ENCODE measurements at regions of chr7 and their contacts with region 1.

Region 1: DNA sequence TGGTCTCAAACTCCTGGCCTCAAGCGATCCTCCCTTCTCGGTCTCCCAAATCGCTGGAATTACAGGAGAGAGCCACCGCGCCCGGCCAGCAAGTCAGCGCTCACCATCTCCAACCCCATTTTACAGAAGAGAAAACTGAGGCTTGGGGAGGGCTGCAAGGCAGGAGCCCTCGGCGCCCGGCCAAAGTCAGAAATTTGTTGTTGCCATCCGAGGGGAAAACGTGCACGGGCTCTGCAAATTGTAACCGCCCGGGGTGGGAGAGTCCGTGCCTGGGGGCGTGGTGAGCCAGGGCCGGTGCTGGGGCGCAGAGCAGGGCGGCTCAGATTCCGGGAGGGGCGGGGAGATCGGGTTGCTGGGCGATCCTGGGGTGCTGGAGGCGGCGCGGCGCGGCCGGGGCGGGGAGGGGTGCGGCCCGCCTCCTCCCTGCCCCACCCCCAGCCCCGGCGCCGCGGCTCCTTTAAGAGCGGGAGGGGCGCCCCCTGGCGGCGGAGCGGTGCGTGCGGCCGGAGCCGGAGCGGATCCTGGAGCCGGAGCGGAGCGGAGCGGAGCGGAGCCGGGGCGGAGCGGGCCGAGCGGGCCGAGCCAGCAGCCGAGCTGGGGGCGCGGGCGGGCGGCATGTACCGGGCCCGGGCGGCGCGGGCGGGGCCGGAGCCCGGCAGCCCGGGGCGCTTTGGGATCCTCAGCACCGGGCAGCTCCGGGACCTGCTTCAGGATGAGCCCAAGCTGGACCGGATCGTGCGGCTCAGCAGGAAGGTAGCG is at the start of gene VPS37D:
- DNase-seq: peak; percentile 91
- H3K4me3 Mint-ChIP-seq: peak within 1 kb of the TSS; percentile 76
- H3K27ac Mint-ChIP-seq: no peak within 1 kb of the TSS
- H3K4me1 Mint-ChIP-seq: peaks cover 6% of the 10 kb centered on the region
- H3K27me3 Mint-ChIP-seq: peaks cover 33% of the 10 kb centered on the region
- total RNA-seq, gene VPS37D: 0.30 and 0.34 TPM in 2 replicates

Region 2: DNA sequence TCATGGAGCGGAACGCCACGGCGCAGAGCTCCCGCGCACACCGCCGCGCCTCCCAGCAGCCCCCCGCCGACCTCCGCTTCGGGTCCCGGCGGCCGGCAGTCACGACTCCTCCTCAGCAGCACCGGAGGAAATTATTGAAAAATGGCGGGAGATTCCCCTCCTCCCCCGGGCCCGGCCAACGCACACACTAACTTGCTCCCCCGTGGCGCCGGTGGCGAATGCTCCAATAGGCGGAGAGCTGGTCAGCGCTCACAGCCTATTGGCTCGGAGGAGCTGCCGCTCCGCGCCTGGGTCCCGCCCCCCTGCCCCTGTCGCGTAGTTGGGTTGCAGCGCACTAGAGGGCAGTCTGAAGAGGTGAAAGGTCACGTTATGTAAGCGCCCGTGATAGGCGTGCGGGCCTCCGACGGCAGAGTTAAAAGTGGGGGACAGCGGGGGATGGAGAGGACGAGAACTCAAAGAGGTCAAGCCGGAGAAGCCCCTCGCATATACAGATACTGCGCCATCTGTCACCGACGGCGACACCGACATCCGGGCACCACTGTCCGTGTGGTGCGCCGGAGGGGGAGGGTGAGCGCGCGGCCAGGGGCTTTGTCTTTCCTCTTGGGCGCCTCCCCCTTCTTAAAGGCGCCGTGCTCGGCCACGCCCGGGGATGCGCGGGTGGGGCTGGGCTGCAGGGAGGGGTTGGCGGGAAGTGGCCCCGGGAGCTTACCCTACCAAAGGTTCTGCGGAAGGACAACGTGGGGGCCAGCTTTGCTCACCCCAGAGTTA is 145.2 kb before region 1 on chr7 and contains the start of gene BAZ1B:
- intact Hi-C with region 1: loop called (anchors 1 kb)
- DNase-seq: peak; percentile 95
- H3K4me3 Mint-ChIP-seq: peak within 1 kb of the TSS; percentile 98
- H3K27ac Mint-ChIP-seq: peak within 1 kb of the TSS; percentile 94
- H3K4me1 Mint-ChIP-seq: peaks cover 52% of the 10 kb centered on the region
- H3K27me3 Mint-ChIP-seq: no peaks in the 10 kb centered on the region
- total RNA-seq, gene BAZ1B: 99.6 and 101 TPM in 2 replicates

Region 3: DNA sequence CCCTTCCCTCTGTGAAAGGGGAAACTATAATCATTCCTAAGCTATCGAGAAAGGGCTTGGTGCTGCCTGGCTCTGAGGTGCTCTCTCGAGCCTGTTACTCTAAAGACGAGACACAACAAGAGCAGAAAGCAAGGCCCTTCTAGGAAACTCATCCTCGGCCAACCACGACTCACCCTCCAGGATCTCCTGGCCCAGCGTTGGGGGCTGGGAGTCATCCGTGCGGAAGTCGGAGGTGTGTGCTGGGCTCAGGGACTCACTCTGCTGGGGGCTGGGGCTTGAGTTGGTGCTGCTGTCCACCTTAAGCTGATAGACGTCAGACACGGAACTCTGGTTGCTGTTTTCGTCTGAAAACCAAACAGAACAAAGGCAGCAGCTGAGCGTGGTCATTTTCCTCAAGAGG is 127.8 kb before region 1 on chr7:
- intact Hi-C with region 1: no loop called
- DNase-seq: no peak
- H3K4me3 Mint-ChIP-seq: no peak overlapping the region
- H3K27ac Mint-ChIP-seq: no peak overlapping the region
- H3K4me1 Mint-ChIP-seq: no peaks in the 10 kb centered on the region
- H3K27me3 Mint-ChIP-seq: no peaks in the 10 kb centered on the region

Region 4: DNA sequence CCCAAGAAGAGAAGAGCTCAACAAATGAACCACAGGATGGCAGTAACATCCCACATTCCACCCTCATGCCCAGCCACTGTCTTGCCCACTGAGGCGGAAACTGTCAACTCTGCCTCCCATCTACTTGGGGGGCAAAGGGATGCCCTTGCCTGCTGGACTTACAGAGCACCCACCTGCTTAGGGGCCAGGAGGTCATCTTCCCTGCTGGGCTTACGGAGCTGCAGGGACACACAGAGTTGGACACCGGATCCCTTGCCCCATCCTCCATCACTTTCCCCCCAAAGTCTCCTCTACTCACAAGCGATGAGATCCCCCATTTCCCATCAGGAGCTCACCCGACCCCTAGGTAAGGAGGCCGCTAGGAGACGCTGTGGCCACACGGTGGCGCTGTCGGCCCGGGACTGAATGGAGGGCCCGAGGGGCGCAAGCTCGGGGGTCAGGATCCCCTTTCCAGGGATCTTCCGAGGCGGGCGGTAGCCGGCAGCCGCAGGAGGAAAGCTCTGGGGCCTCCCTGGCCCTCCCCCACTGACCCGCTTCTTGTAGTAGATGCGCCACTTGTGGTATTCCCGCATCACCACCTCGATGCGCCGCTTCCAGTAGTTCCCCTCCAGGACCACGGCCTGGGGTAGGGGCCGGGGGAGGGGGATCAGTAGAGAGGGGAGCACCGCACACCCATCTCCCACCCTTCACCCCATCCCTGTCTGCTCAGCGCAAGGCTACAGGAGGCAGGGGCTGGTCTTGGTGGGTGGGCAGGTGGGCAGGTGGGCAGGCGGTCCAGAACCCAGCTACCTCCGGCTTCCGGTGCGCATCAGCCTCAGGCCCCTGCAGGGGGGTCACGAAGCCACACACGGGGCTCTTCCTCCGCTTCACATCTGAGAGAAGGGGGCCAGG is 60.5 kb before region 1 on chr7:
- intact Hi-C with region 1: loop called (anchors 5 kb)
- DNase-seq: peak; percentile 44
- H3K4me3 Mint-ChIP-seq: no peak overlapping the region
- H3K27ac Mint-ChIP-seq: no peak overlapping the region
- H3K4me1 Mint-ChIP-seq: no peaks in the 10 kb centered on the region
- H3K27me3 Mint-ChIP-seq: peaks cover 14% of the 10 kb centered on the region

Region 5: DNA sequence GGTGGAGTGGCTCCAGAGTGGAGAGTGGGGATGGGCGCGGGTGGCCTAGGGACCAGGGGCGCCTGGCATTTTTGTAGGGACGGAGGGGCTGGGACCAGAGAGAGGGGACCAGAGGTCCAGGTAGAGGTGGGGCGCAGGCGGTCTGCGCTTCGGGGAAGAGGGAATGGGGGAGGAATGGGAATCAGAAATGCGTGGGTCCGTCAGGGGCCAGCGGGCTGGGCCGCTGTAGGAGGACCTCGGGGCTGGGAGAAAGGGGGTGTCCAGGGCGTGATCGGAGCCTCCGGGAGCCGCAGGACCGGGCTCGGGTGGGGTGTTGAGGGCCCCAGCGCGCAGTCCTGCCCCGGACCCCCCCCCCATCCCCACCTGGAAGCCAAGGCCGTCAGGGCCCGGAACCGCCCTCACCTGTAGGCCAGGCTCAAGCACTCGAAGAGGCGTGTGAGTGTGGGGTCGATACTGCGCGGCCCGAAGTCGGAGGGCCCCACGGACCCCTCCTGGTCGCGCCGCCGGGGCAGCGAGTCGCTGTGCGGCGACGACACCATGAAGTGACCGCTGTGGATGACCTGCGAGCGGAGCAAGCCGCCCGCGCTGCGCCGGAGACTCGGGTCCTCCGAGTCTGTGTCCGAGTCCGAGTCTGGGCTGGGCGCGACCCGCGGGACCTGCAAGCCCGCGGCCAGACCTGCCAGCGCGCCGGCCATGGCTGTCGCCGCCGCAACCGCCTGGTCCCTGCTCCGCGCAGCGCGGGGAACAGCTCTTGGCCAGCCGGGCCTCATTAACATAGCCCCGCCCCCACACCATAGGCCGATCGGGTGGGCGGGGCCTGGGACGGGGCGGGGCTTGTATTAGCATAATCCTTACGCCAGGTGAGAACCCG is 43.5 kb before region 1 on chr7 and contains the start of gene MLXIPL:
- intact Hi-C with region 1: loop called (anchors 5 kb)
- DNase-seq: peak; percentile 34
- H3K4me3 Mint-ChIP-seq: no peak within 1 kb of the TSS
- H3K27ac Mint-ChIP-seq: no peak within 1 kb of the TSS
- H3K4me1 Mint-ChIP-seq: no peaks in the 10 kb centered on the region
- H3K27me3 Mint-ChIP-seq: peaks cover 54% of the 10 kb centered on the region
- total RNA-seq, gene MLXIPL: not detected in 2 replicates

Region 6: DNA sequence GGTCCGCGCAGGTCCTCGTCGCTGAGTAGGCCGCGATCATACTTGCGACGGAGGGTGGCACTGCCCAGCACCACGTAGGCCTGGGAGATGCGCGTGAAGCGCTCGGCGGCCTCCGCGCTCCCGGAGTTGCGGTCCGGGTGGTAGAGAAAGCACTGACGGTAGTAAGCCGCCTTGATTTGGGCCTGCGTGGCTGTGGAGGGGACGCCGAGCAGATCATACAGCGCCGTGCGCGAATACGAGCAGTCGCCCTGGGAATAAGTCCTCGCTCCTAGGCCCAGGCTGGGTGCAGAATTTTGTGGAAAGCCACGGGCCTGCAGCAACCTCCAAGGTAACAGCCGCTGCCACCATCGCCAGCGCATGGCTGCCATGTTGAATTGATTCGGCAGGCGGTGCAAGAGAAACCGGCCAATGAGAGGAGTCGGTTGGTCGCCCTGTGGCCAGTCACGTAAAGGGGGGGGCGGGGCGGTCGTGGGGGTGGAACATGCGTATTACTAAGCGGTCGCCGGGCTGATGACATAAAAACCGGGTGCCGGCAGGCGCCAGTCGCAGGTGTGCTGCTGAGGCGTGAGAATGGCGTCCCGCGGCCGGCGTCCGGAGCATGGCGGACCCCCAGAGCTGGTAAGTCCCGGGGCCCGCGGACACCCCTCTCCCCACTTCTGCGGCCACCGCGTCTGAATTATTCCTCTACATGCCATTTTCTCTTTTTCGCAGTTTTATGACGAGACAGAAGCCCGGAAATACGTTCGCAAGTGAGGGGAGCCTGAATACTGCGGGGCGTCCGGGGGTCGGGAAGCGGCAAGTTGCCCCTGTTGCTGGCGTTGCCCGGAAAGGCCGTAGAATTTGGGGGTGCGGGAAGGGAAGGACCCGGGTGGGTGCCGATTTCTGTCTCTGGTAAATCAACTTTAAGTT is 15.8 kb after region 1 on chr7 and contains the starts of genes BUD23 and DNAJC30:
- intact Hi-C with region 1: loop called (anchors 1 kb)
- DNase-seq: peak; percentile 88
- H3K4me3 Mint-ChIP-seq: peak within 1 kb of the TSS; percentile 97
- H3K27ac Mint-ChIP-seq: peak within 1 kb of the TSS; percentile 97
- H3K4me1 Mint-ChIP-seq: peaks cover 21% of the 10 kb centered on the region
- H3K27me3 Mint-ChIP-seq: no peaks in the 10 kb centered on the region
- total RNA-seq, gene BUD23: 96.0 and 109 TPM in 2 replicates
- total RNA-seq, gene DNAJC30: 9.2 TPM in 2 replicates

Region 7: GRCh38 chr7:73701357-73701995 is 34.0 kb after region 1 on chr7:
- intact Hi-C with region 1: no loop called
- DNase-seq: no peak
- H3K4me3 Mint-ChIP-seq: no peak overlapping the region
- H3K27ac Mint-ChIP-seq: no peak overlapping the region
- H3K4me1 Mint-ChIP-seq: no peaks in the 10 kb centered on the region
- H3K27me3 Mint-ChIP-seq: no peaks in the 10 kb centered on the region

Region 8: DNA sequence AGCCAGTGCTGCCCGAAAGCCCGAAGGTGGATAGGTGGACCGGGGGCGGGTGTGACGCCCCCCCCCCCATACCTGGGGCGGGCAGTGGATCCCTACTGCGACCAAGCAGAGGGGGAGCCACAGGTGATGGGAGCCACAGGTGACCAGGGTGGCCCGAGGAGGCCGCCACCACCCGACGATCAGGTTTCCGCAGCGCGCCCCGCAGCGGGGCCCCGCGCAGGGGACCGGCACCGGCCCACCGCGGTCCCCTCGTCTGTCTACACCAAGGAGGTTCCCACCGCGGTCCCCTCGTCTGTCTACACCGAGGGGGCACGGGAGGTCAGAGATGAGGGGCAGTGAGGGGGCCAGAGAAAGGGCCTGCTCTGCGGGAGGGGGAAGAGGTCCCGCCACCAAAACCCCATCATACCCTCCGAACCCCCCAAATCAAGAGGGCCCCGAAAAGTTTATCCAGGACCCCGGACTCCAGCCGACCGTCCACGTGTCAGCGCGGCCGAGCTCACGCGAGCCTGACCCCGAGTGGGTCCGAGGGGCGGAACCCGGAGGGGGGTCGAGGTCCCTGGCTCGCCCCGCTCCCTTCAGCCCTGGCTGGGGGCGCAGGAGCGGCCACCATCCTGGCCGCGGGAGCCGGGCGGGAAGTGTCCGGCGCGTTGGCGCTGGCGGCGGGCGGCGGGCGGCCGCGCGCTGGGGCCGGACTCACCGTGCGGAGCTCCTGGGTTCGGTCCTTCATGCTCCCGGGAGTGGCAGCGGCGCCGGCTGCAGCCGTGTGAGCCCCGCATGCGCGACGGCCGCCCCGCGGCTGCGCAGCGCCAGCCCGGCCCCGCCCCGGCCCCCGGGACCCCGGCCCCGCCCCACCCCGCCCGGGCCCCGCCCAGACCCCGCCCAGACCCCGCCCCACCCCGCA is 51.6 kb after region 1 on chr7 and contains the start of gene STX1A:
- intact Hi-C with region 1: loop called (anchors 5 kb)
- DNase-seq: peak; percentile 71
- H3K4me3 Mint-ChIP-seq: peak within 1 kb of the TSS; percentile 89
- H3K27ac Mint-ChIP-seq: peak within 1 kb of the TSS; percentile 62
- H3K4me1 Mint-ChIP-seq: peaks cover 31% of the 10 kb centered on the region
- H3K27me3 Mint-ChIP-seq: peaks cover 9% of the 10 kb centered on the region
- total RNA-seq, gene STX1A: 17.2 and 17.6 TPM in 2 replicates

Region 9: DNA sequence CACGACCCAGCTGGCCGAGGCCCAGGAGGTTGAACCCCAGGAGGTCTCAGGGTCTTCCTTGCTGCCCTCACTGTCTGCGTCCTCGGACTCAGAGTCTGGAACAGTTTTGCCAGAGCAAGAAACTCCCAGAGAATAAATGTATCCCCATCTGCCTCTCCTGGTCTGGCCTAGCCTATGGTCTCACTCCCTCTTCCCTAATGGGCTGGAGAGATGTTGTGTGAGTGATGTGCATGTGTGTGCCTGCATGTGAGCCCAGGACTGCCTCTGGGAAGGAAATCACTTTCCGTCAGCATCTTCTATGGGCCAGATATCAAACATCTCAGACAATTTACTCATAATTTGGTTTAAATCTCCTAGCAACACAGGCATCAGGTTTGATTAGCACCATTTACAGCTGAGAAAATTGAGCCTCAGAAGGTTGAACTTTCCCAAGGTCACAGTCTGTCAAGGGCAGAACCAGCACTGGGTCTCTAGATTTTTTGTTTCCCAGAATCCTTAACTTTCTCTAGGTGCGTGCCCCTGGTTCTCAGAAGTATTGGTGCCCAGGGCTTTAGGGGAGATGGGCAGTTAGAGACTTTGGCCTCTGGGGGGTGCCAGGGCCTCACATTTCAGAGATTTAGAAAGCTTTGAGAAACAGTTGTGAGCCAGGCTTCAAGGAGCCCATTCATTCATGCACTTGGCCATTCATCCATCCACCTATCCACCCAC is 198.4 kb after region 1 on chr7:
- intact Hi-C with region 1: no loop called
- DNase-seq: no peak
- H3K4me3 Mint-ChIP-seq: no peak overlapping the region
- H3K27ac Mint-ChIP-seq: no peak overlapping the region
- H3K4me1 Mint-ChIP-seq: no peaks in the 10 kb centered on the region
- H3K27me3 Mint-ChIP-seq: no peaks in the 10 kb centered on the region

Measured in activated T-helper 2 cell treated with anti-CD3 and anti-CD28 coated beads, Interferon-gamma antibody, Interleukin-2, Interleukin-4, amounts not matched to agents 10 μg/mL and 5 μg/mL and 100 μg/mL, durations not matched to agents 14 hours and 24 hours and 36 hours (primary cell).